Stomach (tissue), 19 donors: ENCODE measurements at regions of chr3 and their contacts with region 1.

Region 1: GRCh38 chr3:72996473-72997333 is at the start of gene PPP4R2:
- DNase-seq: peak; percentile 90 to 97
- H3K4me3 ChIP-seq: peak within 1 kb of the TSS; percentile 75 to 87 (median 86)
- H3K27ac ChIP-seq: peak within 1 kb of the TSS; percentile 97 to 99 (median 99)
- H3K4me1 ChIP-seq: peaks cover 30 to 49% (median 44%) of the 10 kb centered on the region in 4 donors
- H3K27me3 ChIP-seq: no peaks in the 10 kb centered on the region
- CTCF ChIP-seq: no peak
- EP300 ChIP-seq: no peak
- POLR2A ChIP-seq: peak in 1 of 4 donors; percentile 73
- total RNA-seq, gene PPP4R2: 12.8 to 100 (median 31.4) TPM

Region 2: DNA sequence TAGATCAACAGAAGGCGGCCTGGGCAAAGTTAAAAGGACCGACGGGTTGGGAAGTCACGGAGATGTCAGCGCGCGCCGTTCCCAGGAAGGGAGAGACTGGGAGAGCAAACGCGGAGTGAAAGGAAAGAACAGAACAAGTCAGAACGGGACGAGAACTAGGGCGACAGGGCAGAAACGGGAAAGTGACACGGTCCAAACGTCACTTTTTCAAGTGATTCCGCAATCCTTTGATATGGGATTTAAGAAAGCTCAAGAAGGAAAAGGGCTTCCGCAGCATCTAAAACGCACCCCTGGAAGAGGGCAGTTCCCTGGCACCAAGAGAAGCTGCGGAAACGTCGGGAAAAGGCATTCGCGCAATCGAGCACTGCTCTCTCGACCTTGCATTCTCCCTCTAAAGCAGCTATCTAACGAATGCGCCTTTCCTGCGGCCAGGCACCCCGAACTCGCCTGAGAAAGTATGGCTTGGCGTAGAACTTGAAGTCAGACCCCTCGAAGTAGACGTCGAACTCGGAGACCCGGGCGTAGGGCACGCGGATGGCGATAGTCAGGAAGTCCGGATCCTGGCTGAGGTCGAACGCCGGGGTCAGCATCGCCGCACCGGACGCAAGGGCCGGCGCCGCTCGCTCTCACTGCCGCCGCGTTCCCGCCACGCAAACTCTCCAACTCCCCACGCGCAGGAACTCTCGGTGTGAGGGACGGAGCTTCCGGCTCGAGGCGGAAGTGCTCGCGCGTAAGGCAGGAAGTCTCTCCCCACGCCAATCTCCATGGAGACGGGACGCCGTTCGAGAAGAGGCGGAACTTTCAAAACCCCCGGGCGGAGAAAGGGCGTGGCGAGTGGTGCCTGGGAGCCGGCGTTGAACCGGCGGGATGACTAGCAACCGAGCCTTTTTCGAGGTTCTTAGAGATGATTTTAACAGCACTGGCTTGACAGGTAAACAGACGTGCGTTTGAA is 148.7 kb before region 1 on chr3 and contains the start of gene SHQ1:
- intact Hi-C with region 1: loop called (anchors 5 kb)
- DNase-seq: peak; percentile 97 to 99
- H3K4me3 ChIP-seq: peak within 1 kb of the TSS; percentile 76 to 98 (median 85)
- H3K27ac ChIP-seq: peak within 1 kb of the TSS; percentile 62 to 88 (median 80)
- H3K4me1 ChIP-seq: peaks cover 15 to 43% (median 28%) of the 10 kb centered on the region in 4 donors
- H3K27me3 ChIP-seq: no peaks in the 10 kb centered on the region
- CTCF ChIP-seq: no peak
- EP300 ChIP-seq: no peak
- POLR2A ChIP-seq: no peak
- total RNA-seq, gene SHQ1: 11.7 to 77.9 (median 30.7) TPM

Region 3: GRCh38 chr3:73056014-73056844 is 59.5 kb after region 1 on chr3:
- intact Hi-C with region 1: loop called (anchors 10 kb)
- DNase-seq: peak in 1 of 2 donors; percentile 75
- H3K4me3 ChIP-seq: no peak overlapping the region
- H3K27ac ChIP-seq: peak overlapping the region in 2 of 5 donors; percentile 10 to 40
- H3K4me1 ChIP-seq: peaks cover 8 to 17% (median 10%) of the 10 kb centered on the region in 4 donors
- H3K27me3 ChIP-seq: no peaks in the 10 kb centered on the region
- CTCF ChIP-seq: peak in 3 of 7 experiments; percentile 28 to 51 (median 49)
- EP300 ChIP-seq: no peak
- POLR2A ChIP-seq: no peak

Region 4: GRCh38 chr3:73259856-73260255 is 263.2 kb after region 1 on chr3:
- intact Hi-C with region 1: no loop called
- DNase-seq: no peak
- H3K4me3 ChIP-seq: no peak overlapping the region
- H3K27ac ChIP-seq: no peak overlapping the region
- H3K4me1 ChIP-seq: peaks cover 0 to 6% (median 3%) of the 10 kb centered on the region in 4 donors
- H3K27me3 ChIP-seq: no peaks in the 10 kb centered on the region
- CTCF ChIP-seq: no peak
- EP300 ChIP-seq: no peak
- POLR2A ChIP-seq: no peak

Region 5: GRCh38 chr3:73432023-73432705 is 435.5 kb after region 1 on chr3:
- intact Hi-C with region 1: no loop called
- DNase-seq: peak in 1 of 2 donors; percentile 72
- H3K4me3 ChIP-seq: peak overlapping the region in 1 of 4 donors; percentile 9
- H3K27ac ChIP-seq: peak overlapping the region in 4 of 5 donors; percentile 16 to 85 (median 34)
- H3K4me1 ChIP-seq: peaks cover 2 to 79% (median 39%) of the 10 kb centered on the region in 4 donors
- H3K27me3 ChIP-seq: no peaks in the 10 kb centered on the region
- CTCF ChIP-seq: peak in 5 of 7 experiments; percentile 25 to 82 (median 33)
- EP300 ChIP-seq: no peak
- POLR2A ChIP-seq: no peak